Spleen (tissue), 13 donors: ENCODE measurements at regions of chr4 and their contacts with region 1.

Region 1: DNA sequence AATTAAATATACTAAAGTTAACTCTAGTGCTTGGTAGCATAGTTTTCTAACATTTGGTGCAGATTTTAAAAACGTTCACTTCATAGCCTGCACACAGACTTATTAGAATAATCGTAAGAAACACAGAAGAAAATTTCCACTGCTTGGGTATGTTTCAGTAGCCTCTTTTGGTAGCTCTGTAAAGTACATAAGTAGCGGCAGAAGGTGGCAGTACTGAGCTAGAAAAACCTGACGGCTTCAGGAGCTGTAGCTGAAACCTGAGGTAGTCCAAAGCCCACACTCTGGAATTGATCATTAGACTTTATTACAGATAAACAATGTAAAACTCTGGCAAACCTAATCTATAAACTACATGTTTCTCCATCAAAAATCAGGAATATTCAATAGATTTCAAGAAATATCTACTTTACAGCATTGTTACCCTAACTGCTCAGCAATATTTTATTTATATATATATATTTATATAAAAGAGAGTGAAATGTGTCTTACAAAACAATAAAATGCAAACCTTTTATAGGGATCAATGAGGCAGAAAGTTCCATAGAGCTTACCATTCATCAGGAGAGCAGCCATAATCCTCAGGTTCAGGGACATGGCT is 88.2 kb downstream of the ATP8A1 start:
- DNase-seq: no peak
- H3K4me3 ChIP-seq: no peak overlapping the region
- H3K27ac ChIP-seq: no peak overlapping the region
- H3K4me1 ChIP-seq: peaks cover 0 to 7% (median 0%) of the 10 kb centered on the region in 6 donors
- H3K27me3 ChIP-seq: no peaks in the 10 kb centered on the region
- CTCF ChIP-seq: peak; percentile 42 to 84 (median 72)
- POLR2A ChIP-seq: no peak

Region 2: DNA sequence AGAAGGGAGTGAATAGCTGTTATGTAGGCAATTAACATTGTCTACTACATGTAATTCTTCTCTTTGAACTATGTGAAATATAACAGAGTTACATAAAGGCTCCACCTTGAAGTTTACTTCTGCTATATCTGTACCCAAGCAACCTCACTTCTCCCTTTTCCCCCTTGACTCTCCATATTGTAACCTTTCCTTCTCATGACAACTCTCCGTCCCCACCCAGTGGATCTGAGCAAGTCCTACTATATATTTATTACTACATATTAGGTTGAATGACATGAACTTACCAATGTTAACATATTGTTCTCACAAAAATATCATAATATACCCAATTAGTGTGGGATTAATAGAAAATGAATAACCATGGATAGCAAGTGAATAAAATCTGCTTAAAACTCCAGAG is 181.4 kb after region 1 on chr4:
- intact Hi-C with region 1: loop called (anchors 5 kb)
- DNase-seq: no peak
- H3K4me3 ChIP-seq: no peak overlapping the region
- H3K27ac ChIP-seq: no peak overlapping the region
- H3K4me1 ChIP-seq: no peaks in the 10 kb centered on the region
- H3K27me3 ChIP-seq: no peaks in the 10 kb centered on the region
- CTCF ChIP-seq: peak in 5 of 11 experiments; percentile 16 to 59 (median 25)
- POLR2A ChIP-seq: no peak

Region 3: GRCh38 chr4:42865572-42866189 is 297.0 kb after region 1 on chr4:
- intact Hi-C with region 1: loop called (anchors 5 kb)
- DNase-seq: no peak
- H3K4me3 ChIP-seq: no peak overlapping the region
- H3K27ac ChIP-seq: no peak overlapping the region
- H3K4me1 ChIP-seq: no peaks in the 10 kb centered on the region
- H3K27me3 ChIP-seq: peaks cover 0 to 11% (median 0%) of the 10 kb centered on the region in 7 donors
- CTCF ChIP-seq: peak; percentile 39 to 76 (median 67)
- POLR2A ChIP-seq: no peak